ENCODE measurements at regions of chr18 and their contacts with region 1.

Region 1: GRCh38 chr18:28095041-28095440 is 81.9 kb downstream of the CDH2 start:
- DNase-seq: no peak
- ATAC-seq: peak in 1 of 8 donors; percentile 15
- H3K4me3 ChIP-seq: no peak overlapping the region
- H3K27ac ChIP-seq: no peak overlapping the region
- H3K4me1 ChIP-seq: peaks cover 0 to 30% (median 5%) of the 10 kb centered on the region in 9 donors
- H3K27me3 ChIP-seq: no peaks in the 10 kb centered on the region
- CTCF ChIP-seq: no peak

Region 2: DNA sequence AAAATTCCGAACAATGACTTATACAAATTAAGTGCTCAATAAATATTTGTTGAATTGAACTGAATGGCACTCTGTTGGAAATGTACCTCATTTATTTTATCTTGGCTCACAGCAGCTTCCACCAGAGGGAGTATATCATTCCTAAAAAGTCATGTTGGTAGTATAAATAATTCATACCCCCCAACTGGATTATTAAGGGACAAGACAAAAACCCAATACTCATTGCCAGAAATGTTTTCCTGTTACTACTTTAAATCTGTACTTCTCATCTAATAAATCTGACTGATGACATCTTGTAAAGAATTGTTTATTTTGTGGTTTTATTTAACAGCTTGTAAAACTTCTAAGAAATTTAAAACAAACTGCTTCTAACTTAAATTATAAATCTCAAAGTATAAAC is 82.0 kb before region 1 on chr18:
- intact Hi-C with region 1: loop called in 4 of 10 experiments (anchors 10 kb)
- DNase-seq: no peak
- ATAC-seq: no peak
- H3K4me3 ChIP-seq: no peak overlapping the region
- H3K27ac ChIP-seq: no peak overlapping the region
- H3K4me1 ChIP-seq: peaks cover 0 to 25% (median 0%) of the 10 kb centered on the region in 9 donors
- H3K27me3 ChIP-seq: no peaks in the 10 kb centered on the region
- CTCF ChIP-seq: peak in 7 of 9 donors; percentile 20 to 41 (median 36)

Measured in heart right ventricle (tissue), 16 donors.